ENCODE measurements at regions of chr5 and their contacts with region 1.

Region 1: DNA sequence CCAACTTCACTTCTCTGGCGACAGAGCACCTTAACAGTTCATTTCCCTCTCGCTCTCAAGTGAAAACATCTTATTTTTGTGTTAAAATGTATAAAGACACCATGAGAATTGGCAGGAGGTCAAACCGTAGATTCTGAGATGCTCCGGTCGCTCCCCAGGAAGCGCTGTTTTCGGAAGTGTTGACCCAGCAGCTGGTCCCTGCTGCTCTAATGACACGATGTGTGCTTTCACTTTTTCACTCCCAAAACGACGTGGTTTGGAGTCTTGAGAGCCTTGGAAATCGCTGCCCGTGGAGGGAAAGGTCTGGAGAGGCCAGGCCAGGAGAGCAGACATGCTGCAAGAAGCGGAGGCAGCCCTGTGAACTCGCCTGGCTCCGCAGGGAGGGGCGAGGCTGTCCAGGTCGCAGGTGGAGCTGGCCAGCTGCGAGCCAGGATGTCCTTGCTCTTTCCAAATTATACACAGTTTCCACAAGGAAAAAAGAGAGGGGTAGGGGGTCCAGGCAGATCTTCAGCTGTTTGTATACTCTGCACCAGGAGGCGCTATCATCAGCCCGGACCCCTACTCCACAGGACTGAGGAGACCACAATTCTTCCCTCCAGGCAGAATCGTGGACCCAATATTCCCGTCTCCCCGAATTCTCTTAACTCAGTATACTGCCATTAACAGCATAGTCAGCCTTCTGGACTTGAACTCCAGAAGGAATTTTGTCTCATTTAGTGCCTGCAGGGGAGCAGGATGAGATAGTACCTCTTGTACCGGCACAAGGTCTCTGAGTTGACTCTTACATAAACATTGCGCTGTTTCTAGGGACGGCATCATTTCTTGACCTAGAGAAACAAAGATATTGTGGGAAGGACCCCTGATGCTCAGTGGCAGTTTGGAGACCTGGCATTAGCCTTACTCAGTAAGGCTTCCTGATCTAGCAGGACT is 248.6 kb upstream of the ANKRD55 start:
- DNase-seq: peak; percentile 58 to 73 (median 67)
- H3K4me3 ChIP-seq: peak overlapping the region; percentile 64
- H3K27ac ChIP-seq: peak overlapping the region; percentile 80 to 96
- H3K4me1 ChIP-seq: peaks cover 10% of the 10 kb centered on the region
- H3K27me3 ChIP-seq: no peaks in the 10 kb centered on the region
- CTCF ChIP-seq: no peak
- EP300 ChIP-seq: no peak
- POLR2A ChIP-seq: no peak

Region 2: GRCh38 chr5:56350598-56351170 is 131.0 kb before region 1 on chr5:
- intact Hi-C with region 1: loop called in 1 of 4 experiments (anchors 10 kb)
- DNase-seq: peak; percentile 63 to 83 (median 71)
- H3K4me3 ChIP-seq: no peak overlapping the region
- H3K27ac ChIP-seq: no peak overlapping the region
- H3K4me1 ChIP-seq: peaks cover 9% of the 10 kb centered on the region
- H3K27me3 ChIP-seq: no peaks in the 10 kb centered on the region
- CTCF ChIP-seq: no peak
- EP300 ChIP-seq: no peak
- POLR2A ChIP-seq: no peak

Region 3: GRCh38 chr5:56814963-56815658 is 333.4 kb after region 1 on chr5 and contains the start of gene MAP3K1:
- intact Hi-C with region 1: loop called in 1 of 4 experiments (anchors 10 kb)
- DNase-seq: peak; percentile 71 to 89 (median 80)
- H3K4me3 ChIP-seq: peak within 1 kb of the TSS; percentile 81
- H3K27ac ChIP-seq: peak within 1 kb of the TSS; percentile 76 to 90
- H3K4me1 ChIP-seq: peaks cover 2% of the 10 kb centered on the region
- H3K27me3 ChIP-seq: no peaks in the 10 kb centered on the region
- CTCF ChIP-seq: no peak
- EP300 ChIP-seq: no peak
- POLR2A ChIP-seq: no peak
- total RNA-seq, gene MAP3K1: 15.7 to 29.8 (median 21.7) TPM

Measured in ovary (tissue), 10 donors.